Endothelial cell of umbilical vein (primary cell): ENCODE measurements at regions of chr6 and their contacts with region 1.

Region 1: DNA sequence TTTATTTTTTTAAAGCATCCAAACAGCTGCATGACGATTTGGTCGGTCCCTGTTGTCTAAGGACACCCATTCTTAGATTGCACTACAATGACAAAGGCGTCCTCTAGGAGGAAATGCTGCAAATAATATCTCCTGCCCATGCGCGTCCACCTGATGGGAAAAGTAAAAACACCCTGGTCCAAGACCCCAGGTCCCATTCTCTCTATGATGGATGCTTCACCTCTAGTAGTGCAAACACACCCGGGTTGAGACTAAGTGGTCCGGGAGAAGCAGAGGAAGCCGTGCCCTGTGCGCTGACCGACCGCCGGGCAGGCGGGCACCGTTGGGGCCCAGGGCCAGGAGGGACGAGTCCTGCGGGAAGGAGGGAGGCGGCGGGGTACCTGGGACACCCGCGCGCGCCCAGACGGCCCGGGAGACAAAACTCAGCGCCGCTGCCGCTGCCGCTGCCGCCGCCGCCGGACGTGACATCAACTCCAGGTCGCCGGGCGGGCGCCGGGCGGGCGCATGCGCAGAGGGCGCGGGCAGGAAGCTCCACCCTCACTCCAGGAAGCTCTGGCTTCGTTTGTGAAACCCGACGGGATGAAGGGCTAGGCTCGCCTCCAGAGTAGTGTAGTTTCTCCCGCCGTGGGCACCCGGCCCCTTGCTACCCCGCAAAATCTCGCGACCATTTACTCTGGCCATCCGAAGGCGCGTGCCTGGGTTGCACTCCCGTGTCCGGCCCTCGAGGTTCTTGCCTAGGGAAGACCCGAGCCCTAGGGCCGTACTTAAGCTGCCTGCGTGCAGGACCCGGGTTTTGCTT is at the start of gene TBC1D7:
- DNase-seq: peak; percentile 94
- H3K4me3 ChIP-seq: peak within 1 kb of the TSS; percentile 76 to 92 (median 87)
- H3K27ac ChIP-seq: peak within 1 kb of the TSS; percentile 92
- H3K4me1 ChIP-seq: peaks cover 16% of the 10 kb centered on the region
- H3K27me3 ChIP-seq: no peaks in the 10 kb centered on the region
- CTCF ChIP-seq: no peak
- POLR2A ChIP-seq: peak; percentile 94
- total RNA-seq, gene TBC1D7: 26.6 and 28.1 TPM in 2 replicates

Region 2: DNA sequence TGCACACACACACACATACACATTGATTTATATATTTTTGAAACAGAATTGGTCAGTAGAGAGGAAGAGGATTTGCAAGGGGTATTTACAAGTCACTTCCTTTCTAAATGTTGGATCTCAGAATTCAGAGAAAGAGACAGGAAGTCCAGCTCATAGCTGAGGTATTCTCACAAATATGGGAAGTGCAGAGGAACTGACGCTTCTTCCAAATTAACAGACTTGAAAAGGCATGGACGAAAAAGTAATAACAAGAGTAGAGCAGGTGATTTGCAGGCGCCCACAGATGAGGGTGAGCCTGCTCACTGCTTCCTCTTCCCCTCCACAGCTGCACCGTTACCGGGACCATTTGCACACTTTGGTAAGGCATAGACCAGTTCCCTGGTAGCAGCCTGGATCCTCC is 365.3 kb before region 1 on chr6:
- CTCF ChIA-PET with region 1: interaction called, 4 read pairs
- POLR2A ChIA-PET with region 1: no interaction called
- dilution Hi-C with region 1: no loop called
- intact Hi-C with region 1: loop called (anchors 2 kb)
- DNase-seq: peak; percentile 84
- H3K4me3 ChIP-seq: peak overlapping the region in 1 of 3 experiments; percentile 34
- H3K27ac ChIP-seq: peak overlapping the region; percentile 96
- H3K4me1 ChIP-seq: peaks cover 30% of the 10 kb centered on the region
- H3K27me3 ChIP-seq: no peaks in the 10 kb centered on the region
- CTCF ChIP-seq: no peak
- POLR2A ChIP-seq: no peak

Region 3: GRCh38 chr6:13194852-13195251 is 133.4 kb before region 1 on chr6:
- CTCF ChIA-PET with region 1: interaction called, 45 read pairs
- POLR2A ChIA-PET with region 1: no interaction called
- dilution Hi-C with region 1: no loop called
- intact Hi-C with region 1: loop called (anchors 1 kb)
- DNase-seq: peak; percentile 69
- H3K4me3 ChIP-seq: no peak overlapping the region
- H3K27ac ChIP-seq: no peak overlapping the region
- H3K4me1 ChIP-seq: no peaks in the 10 kb centered on the region
- H3K27me3 ChIP-seq: no peaks in the 10 kb centered on the region
- CTCF ChIP-seq: peak; percentile 51 to 72
- POLR2A ChIP-seq: no peak

Region 4: DNA sequence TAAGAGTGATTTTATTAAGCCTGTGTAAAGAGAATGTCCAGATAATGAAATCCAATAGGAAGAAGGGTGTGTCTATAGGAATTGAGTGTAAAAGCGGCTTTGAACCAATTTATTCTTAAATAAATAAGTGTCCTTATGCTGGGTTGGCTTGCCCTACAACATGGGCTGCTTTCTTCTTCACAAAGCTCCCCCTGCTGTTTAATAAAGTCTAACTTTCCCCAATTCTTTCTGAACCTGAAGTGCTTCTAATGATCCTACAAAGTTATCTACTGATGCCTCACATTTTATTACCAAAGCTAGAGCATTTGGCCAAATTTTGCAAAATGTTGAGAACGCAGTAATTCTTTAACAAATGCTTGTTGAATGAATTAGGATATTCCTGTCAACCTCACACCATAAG is 209.8 kb after region 1 on chr6:
- CTCF ChIA-PET with region 1: interaction called, 12 read pairs
- POLR2A ChIA-PET with region 1: no interaction called
- dilution Hi-C with region 1: no loop called
- intact Hi-C with region 1: no loop called
- DNase-seq: peak; percentile 68
- H3K4me3 ChIP-seq: no peak overlapping the region
- H3K27ac ChIP-seq: no peak overlapping the region
- H3K4me1 ChIP-seq: peaks cover 9% of the 10 kb centered on the region
- H3K27me3 ChIP-seq: no peaks in the 10 kb centered on the region
- CTCF ChIP-seq: peak; percentile 23 to 25
- POLR2A ChIP-seq: no peak